ENCODE measurements at regions of chr14 and their contacts with region 1.

Region 1: GRCh38 chr14:58297762-58298476 is 436 bp upstream of the ARID4A start:
- DNase-seq: peak; percentile 94 to 100 (median 98)
- ATAC-seq: peak; percentile 83
- H3K4me3 ChIP-seq: peak overlapping the region; percentile 85
- H3K4me3 Mint-ChIP-seq: no peak overlapping the region
- H3K27ac ChIP-seq: peak overlapping the region; percentile 95 to 98
- H3K27ac Mint-ChIP-seq: no peak overlapping the region
- H3K4me1 ChIP-seq: peaks cover 30% of the 10 kb centered on the region
- H3K4me1 Mint-ChIP-seq: peaks cover 32% of the 10 kb centered on the region
- H3K27me3 ChIP-seq: no peaks in the 10 kb centered on the region
- H3K27me3 Mint-ChIP-seq: no peaks in the 10 kb centered on the region
- CTCF ChIP-seq: no peak

Region 2: GRCh38 chr14:58048219-58048618 is 249.7 kb before region 1 on chr14:
- CTCF ChIA-PET with region 1: no interaction called
- POLR2A ChIA-PET with region 1: no interaction called
- intact Hi-C with region 1: no loop called
- DNase-seq: no peak
- ATAC-seq: no peak
- H3K4me3 ChIP-seq: no peak overlapping the region
- H3K4me3 Mint-ChIP-seq: no peak overlapping the region
- H3K27ac ChIP-seq: no peak overlapping the region
- H3K27ac Mint-ChIP-seq: no peak overlapping the region
- H3K4me1 ChIP-seq: no peaks in the 10 kb centered on the region
- H3K4me1 Mint-ChIP-seq: no peaks in the 10 kb centered on the region
- H3K27me3 ChIP-seq: no peaks in the 10 kb centered on the region
- H3K27me3 Mint-ChIP-seq: peaks cover 1% of the 10 kb centered on the region
- CTCF ChIP-seq: no peak

Region 3: GRCh38 chr14:58199726-58200479 is 98.0 kb before region 1 on chr14 and contains the start of gene ACTR10:
- CTCF ChIA-PET with region 1: no interaction called
- POLR2A ChIA-PET with region 1: interaction called, 43 read pairs
- intact Hi-C with region 1: loop called in 1 of 2 experiments (anchors 2 kb)
- DNase-seq: peak; percentile 76 to 92 (median 84)
- ATAC-seq: peak; percentile 86
- H3K4me3 ChIP-seq: peak within 1 kb of the TSS; percentile 98
- H3K4me3 Mint-ChIP-seq: peak within 1 kb of the TSS; percentile 94
- H3K27ac ChIP-seq: peak within 1 kb of the TSS; percentile 85 to 89
- H3K27ac Mint-ChIP-seq: peak within 1 kb of the TSS; percentile 95
- H3K4me1 ChIP-seq: peaks cover 15% of the 10 kb centered on the region
- H3K4me1 Mint-ChIP-seq: peaks cover 40% of the 10 kb centered on the region
- H3K27me3 ChIP-seq: no peaks in the 10 kb centered on the region
- H3K27me3 Mint-ChIP-seq: no peaks in the 10 kb centered on the region
- CTCF ChIP-seq: no peak
- total RNA-seq, gene ACTR10: 38.8 to 43.6 TPM

Region 4: GRCh38 chr14:58244556-58245387 is 53.1 kb before region 1 on chr14 and contains the start of gene PSMA3:
- CTCF ChIA-PET with region 1: interaction called, 3 read pairs
- POLR2A ChIA-PET with region 1: interaction called, 102 read pairs
- intact Hi-C with region 1: loop called (anchors 1 to 2 kb)
- DNase-seq: peak; percentile 96 to 99 (median 97)
- ATAC-seq: peak; percentile 89
- H3K4me3 ChIP-seq: peak within 1 kb of the TSS; percentile 72
- H3K4me3 Mint-ChIP-seq: peak within 1 kb of the TSS; percentile 99
- H3K27ac ChIP-seq: peak within 1 kb of the TSS; percentile 93 to 96
- H3K27ac Mint-ChIP-seq: peak within 1 kb of the TSS; percentile 99
- H3K4me1 ChIP-seq: peaks cover 12% of the 10 kb centered on the region
- H3K4me1 Mint-ChIP-seq: peaks cover 52% of the 10 kb centered on the region
- H3K27me3 ChIP-seq: no peaks in the 10 kb centered on the region
- H3K27me3 Mint-ChIP-seq: no peaks in the 10 kb centered on the region
- CTCF ChIP-seq: no peak
- total RNA-seq, gene PSMA3: 104 to 108 TPM

Region 5: GRCh38 chr14:58265401-58265800 is 32.5 kb before region 1 on chr14:
- CTCF ChIA-PET with region 1: no interaction called
- POLR2A ChIA-PET with region 1: interaction called, 22 read pairs
- intact Hi-C with region 1: no loop called
- DNase-seq: no peak
- ATAC-seq: no peak
- H3K4me3 ChIP-seq: no peak overlapping the region
- H3K4me3 Mint-ChIP-seq: no peak overlapping the region
- H3K27ac ChIP-seq: no peak overlapping the region
- H3K27ac Mint-ChIP-seq: peak overlapping the region; percentile 42
- H3K4me1 ChIP-seq: no peaks in the 10 kb centered on the region
- H3K4me1 Mint-ChIP-seq: peaks cover 26% of the 10 kb centered on the region
- H3K27me3 ChIP-seq: no peaks in the 10 kb centered on the region
- H3K27me3 Mint-ChIP-seq: no peaks in the 10 kb centered on the region
- CTCF ChIP-seq: no peak

Region 6: GRCh38 chr14:58280954-58281787 is 16.7 kb before region 1 on chr14:
- CTCF ChIA-PET with region 1: no interaction called
- POLR2A ChIA-PET with region 1: interaction called, 40 read pairs
- intact Hi-C with region 1: loop called in 1 of 2 experiments (anchors 2 kb)
- DNase-seq: peak in 8 of 14 experiments; percentile 5 to 74 (median 32)
- ATAC-seq: peak; percentile 86
- H3K4me3 ChIP-seq: no peak overlapping the region
- H3K4me3 Mint-ChIP-seq: peak overlapping the region; percentile 71
- H3K27ac ChIP-seq: peak overlapping the region; percentile 51 to 73
- H3K27ac Mint-ChIP-seq: peak overlapping the region; percentile 92
- H3K4me1 ChIP-seq: peaks cover 25% of the 10 kb centered on the region
- H3K4me1 Mint-ChIP-seq: peaks cover 67% of the 10 kb centered on the region
- H3K27me3 ChIP-seq: no peaks in the 10 kb centered on the region
- H3K27me3 Mint-ChIP-seq: no peaks in the 10 kb centered on the region
- CTCF ChIP-seq: no peak

Region 7: GRCh38 chr14:58313699-58314098 is 15.8 kb after region 1 on chr14:
- CTCF ChIA-PET with region 1: no interaction called
- POLR2A ChIA-PET with region 1: interaction called, 23 read pairs
- intact Hi-C with region 1: no loop called
- DNase-seq: no peak
- ATAC-seq: no peak
- H3K4me3 ChIP-seq: no peak overlapping the region
- H3K4me3 Mint-ChIP-seq: no peak overlapping the region
- H3K27ac ChIP-seq: no peak overlapping the region
- H3K27ac Mint-ChIP-seq: peak overlapping the region; percentile 30
- H3K4me1 ChIP-seq: peaks cover 3% of the 10 kb centered on the region
- H3K4me1 Mint-ChIP-seq: peaks cover 4% of the 10 kb centered on the region
- H3K27me3 ChIP-seq: no peaks in the 10 kb centered on the region
- H3K27me3 Mint-ChIP-seq: no peaks in the 10 kb centered on the region
- CTCF ChIP-seq: no peak

Region 8: DNA sequence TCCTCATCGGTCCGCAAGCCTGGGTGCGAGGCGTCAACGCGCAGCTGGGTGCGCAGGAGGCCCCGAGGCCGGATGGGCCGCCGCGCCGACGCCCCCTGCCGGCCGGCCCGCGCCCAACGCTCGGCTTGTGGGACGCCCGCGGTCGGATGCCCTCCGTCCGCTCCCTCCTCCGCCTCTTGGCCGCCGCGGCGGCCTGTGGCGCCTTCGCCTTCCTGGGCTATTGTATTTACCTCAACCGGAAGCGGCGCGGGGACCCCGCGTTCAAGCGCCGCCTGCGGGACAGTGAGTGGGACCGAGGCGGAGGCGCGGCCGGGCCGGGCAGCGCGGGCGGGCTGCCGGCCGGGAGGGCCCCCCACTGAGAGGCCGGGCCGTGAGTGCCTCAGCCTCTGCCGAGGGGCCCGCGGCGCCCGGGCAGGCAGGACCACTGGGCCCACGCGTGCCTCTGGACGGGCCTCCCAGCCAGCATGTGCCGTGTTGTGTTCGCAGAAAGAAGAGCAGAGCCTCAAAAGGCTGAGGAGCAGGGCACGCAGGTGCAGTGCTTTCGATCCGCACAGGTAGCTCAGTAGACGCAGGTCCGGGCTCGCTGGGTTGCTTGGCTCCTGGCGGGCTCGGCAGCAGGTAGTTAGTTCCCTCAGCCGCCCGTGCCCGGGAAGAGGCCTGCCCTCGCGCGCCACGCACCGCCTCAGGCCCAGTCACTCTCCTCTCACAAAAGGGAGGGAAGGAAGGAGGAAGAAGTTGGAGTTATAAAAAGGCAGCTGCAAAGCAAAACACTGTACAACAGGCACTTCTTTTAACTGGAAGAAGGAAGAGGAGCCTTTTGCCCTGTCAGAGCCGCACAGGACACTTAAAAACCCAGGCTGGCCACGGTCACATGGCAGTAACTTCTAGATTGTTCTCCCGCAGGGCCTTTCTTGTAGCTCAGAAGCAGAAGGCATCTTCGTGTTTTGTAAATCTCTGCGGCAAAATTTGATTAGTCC is 98.2 kb after region 1 on chr14 and contains the start of gene TOMM20L:
- CTCF ChIA-PET with region 1: no interaction called
- POLR2A ChIA-PET with region 1: interaction called, 38 read pairs
- intact Hi-C with region 1: no loop called
- DNase-seq: peak; percentile 48 to 88 (median 66)
- ATAC-seq: peak; percentile 77
- H3K4me3 ChIP-seq: peak within 1 kb of the TSS; percentile 71
- H3K4me3 Mint-ChIP-seq: peak within 1 kb of the TSS; percentile 88
- H3K27ac ChIP-seq: peak within 1 kb of the TSS; percentile 69 to 75
- H3K27ac Mint-ChIP-seq: peak within 1 kb of the TSS; percentile 85
- H3K4me1 ChIP-seq: peaks cover 13% of the 10 kb centered on the region
- H3K4me1 Mint-ChIP-seq: peaks cover 12% of the 10 kb centered on the region
- H3K27me3 ChIP-seq: no peaks in the 10 kb centered on the region
- H3K27me3 Mint-ChIP-seq: no peaks in the 10 kb centered on the region
- CTCF ChIP-seq: peak; percentile 80
- total RNA-seq, gene TOMM20L: 0.56 TPM in 1 of 2 experiments, not detected in the other